Panc1 (cell line): ENCODE measurements at regions of chrX and their contacts with region 1.

Region 1: GRCh38 chrX:132520213-132520612 is 31.4 kb upstream of the MBNL3 start:
- DNase-seq: no peak
- ATAC-seq: no peak
- H3K4me3 ChIP-seq: no peak overlapping the region
- H3K27ac ChIP-seq: no peak overlapping the region
- H3K4me1 ChIP-seq: no peaks in the 10 kb centered on the region
- H3K27me3 ChIP-seq: no peaks in the 10 kb centered on the region; the same call in 1 of the 2 replicates
- CTCF ChIP-seq: no peak

Region 2: GRCh38 chrX:132401935-132402334 is 118.3 kb before region 1 on chrX:
- CTCF ChIA-PET with region 1: no interaction called
- POLR2A ChIA-PET with region 1: no interaction called
- in situ Hi-C with region 1: no loop called
- intact Hi-C with region 1: no loop called
- DNase-seq: no peak
- ATAC-seq: no peak
- H3K4me3 ChIP-seq: no peak overlapping the region
- H3K27ac ChIP-seq: no peak overlapping the region
- H3K4me1 ChIP-seq: no peaks in the 10 kb centered on the region
- H3K27me3 ChIP-seq: no peaks in the 10 kb centered on the region
- CTCF ChIP-seq: no peak

Region 3: GRCh38 chrX:132501606-132502005 is 18.6 kb before region 1 on chrX:
- CTCF ChIA-PET with region 1: no interaction called
- POLR2A ChIA-PET with region 1: no interaction called
- in situ Hi-C with region 1: no loop called
- intact Hi-C with region 1: no loop called
- DNase-seq: no peak
- ATAC-seq: no peak
- H3K4me3 ChIP-seq: no peak overlapping the region
- H3K27ac ChIP-seq: no peak overlapping the region
- H3K4me1 ChIP-seq: no peaks in the 10 kb centered on the region
- H3K27me3 ChIP-seq: no peaks in the 10 kb centered on the region; the same call in 1 of the 2 replicates
- CTCF ChIP-seq: no peak

Region 4: GRCh38 chrX:132671229-132671641 is 151.0 kb after region 1 on chrX:
- CTCF ChIA-PET with region 1: no interaction called
- POLR2A ChIA-PET with region 1: interaction called, 10 read pairs
- in situ Hi-C with region 1: no loop called
- intact Hi-C with region 1: no loop called
- DNase-seq: no peak
- ATAC-seq: no peak
- H3K4me3 ChIP-seq: no peak overlapping the region
- H3K27ac ChIP-seq: no peak overlapping the region
- H3K4me1 ChIP-seq: no peaks in the 10 kb centered on the region
- H3K27me3 ChIP-seq: peaks cover 3% of the 10 kb centered on the region
- CTCF ChIP-seq: no peak